Common myeloid progenitor, CD34-positive (primary cell): ENCODE measurements at regions of chr7 and their contacts with region 1.

Region 1: DNA sequence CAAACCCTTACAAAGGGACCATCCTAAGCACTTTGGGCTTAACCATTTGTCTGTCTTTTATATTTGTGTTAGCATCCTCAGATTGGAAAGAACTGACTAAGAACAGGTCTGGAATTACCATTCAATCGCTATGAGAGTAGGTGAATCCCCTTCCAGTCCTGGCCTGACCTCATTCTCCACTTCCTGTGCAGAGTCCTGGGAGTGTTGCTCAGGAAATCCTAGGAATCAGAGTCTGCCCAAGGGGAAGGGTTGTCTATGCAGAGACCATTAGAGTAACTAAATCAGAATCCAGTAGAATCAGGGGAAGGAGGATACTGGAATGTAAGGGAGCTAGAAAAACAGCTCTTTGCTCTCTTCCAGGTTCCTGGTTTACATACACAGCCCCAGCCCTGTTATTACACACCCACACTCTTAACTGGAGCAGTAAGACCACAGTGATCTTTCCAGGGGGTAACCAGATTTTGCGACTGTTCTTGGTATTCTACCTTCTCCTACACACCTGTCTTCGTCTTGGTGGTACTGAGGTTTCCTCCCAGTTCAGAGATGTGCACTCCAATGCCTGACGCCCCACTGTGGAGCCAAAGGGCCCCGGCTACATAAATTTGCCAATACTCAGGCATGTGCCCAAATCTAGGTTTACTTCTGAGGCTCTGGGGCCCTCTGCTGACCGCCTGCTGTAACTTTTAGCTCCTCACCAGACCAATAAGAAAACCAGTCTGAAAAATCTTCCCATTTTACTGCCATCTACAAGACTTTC is 103.7 kb downstream of the RNF216 start:
- DNase-seq: peak; percentile 68 to 85 (median 83)
- H3K4me3 ChIP-seq: no peak overlapping the region
- H3K27ac ChIP-seq: no peak overlapping the region
- H3K4me1 ChIP-seq: peaks cover 0 to 26% (median 8%) of the 10 kb centered on the region in 4 experiments
- H3K27me3 ChIP-seq: no peaks in the 10 kb centered on the region

Region 2: DNA sequence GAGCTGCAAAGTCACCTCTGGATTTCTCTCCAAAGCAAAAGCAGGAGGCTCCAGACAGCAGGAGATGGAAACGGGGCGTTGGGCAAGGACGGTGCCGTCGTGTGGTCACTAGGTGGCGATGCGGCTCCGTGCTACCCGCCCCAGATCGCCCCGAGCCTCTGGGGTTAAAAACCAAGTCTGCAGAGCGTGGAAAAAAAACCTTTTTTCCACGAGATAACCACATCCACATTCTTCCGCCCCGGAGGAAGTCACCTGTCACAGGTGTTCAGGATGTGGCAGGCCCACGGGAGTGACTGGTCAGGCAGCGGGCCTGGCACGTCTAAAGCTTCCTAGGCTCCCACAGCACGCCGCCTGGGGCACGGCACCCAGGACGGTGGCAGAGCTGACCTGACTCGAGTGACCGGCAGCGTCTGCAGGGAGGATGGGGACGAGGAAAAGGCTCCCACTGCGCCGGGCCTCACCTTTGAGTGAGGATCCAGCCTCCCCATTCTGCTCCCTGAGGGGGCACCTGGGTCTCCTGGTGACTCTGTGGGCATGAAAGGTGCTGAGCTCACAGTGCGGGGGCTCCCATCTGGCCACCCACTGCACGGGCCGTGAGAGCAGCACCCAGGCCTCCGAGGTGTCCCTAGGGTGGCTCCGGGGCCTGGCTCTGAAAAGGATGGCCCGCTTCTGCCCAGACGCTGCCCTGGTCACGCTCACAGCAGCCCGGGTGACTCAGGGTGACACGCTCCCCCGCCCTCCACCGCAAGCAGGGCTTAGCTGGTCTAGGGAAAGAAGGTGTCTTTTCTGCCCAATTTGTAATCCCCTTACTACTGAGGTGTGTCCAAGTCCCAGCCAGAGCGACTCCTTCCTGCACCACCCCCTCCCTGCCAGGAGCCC is 182.8 kb before region 1 on chr7:
- CTCF ChIA-PET with region 1: interaction called, 87 read pairs
- POLR2A ChIA-PET with region 1: no interaction called
- DNase-seq: peak; percentile 76 to 85 (median 82)
- H3K4me3 ChIP-seq: peak overlapping the region in 4 of 7 experiments; percentile 25 to 59 (median 36)
- H3K27ac ChIP-seq: no peak overlapping the region
- H3K4me1 ChIP-seq: peaks cover 0 to 52% (median 44%) of the 10 kb centered on the region in 4 experiments
- H3K27me3 ChIP-seq: no peaks in the 10 kb centered on the region

Region 3: GRCh38 chr7:5636914-5637313 is 40.8 kb before region 1 on chr7:
- CTCF ChIA-PET with region 1: no interaction called
- POLR2A ChIA-PET with region 1: no interaction called
- DNase-seq: peak; percentile 48 to 74 (median 71)
- H3K4me3 ChIP-seq: peak overlapping the region in 1 of 7 experiments; percentile 35
- H3K27ac ChIP-seq: peak overlapping the region in 1 of 2 experiments; percentile 22
- H3K4me1 ChIP-seq: peaks cover 0 to 41% (median 27%) of the 10 kb centered on the region in 4 experiments
- H3K27me3 ChIP-seq: no peaks in the 10 kb centered on the region

Region 4: DNA sequence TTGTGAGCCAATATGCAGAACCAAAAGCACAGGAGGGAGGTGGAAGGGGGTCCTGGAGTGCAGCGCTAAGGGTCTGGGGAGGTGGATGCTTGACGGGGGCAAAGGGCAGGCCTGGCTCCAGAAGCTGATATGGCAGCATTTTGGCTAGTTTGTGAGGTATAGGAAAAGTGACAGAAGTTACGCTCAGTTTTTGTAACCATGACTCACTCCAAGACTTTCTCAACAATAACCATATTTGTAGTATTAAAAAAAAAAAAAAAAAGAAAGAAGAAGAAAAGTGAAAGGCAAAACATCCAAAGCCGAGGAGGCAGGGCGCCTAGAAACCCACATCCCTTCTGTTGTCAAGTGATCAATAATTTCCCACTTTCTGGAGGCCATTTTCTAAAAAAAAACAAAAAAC is 11.4 kb after region 1 on chr7:
- CTCF ChIA-PET with region 1: interaction called, 48 read pairs
- POLR2A ChIA-PET with region 1: interaction called, 4 read pairs
- DNase-seq: peak in 2 of 3 donors; percentile 62 to 64
- H3K4me3 ChIP-seq: no peak overlapping the region
- H3K27ac ChIP-seq: no peak overlapping the region
- H3K4me1 ChIP-seq: peaks cover 17 to 30% (median 22%) of the 10 kb centered on the region in 4 experiments
- H3K27me3 ChIP-seq: no peaks in the 10 kb centered on the region

Region 5: DNA sequence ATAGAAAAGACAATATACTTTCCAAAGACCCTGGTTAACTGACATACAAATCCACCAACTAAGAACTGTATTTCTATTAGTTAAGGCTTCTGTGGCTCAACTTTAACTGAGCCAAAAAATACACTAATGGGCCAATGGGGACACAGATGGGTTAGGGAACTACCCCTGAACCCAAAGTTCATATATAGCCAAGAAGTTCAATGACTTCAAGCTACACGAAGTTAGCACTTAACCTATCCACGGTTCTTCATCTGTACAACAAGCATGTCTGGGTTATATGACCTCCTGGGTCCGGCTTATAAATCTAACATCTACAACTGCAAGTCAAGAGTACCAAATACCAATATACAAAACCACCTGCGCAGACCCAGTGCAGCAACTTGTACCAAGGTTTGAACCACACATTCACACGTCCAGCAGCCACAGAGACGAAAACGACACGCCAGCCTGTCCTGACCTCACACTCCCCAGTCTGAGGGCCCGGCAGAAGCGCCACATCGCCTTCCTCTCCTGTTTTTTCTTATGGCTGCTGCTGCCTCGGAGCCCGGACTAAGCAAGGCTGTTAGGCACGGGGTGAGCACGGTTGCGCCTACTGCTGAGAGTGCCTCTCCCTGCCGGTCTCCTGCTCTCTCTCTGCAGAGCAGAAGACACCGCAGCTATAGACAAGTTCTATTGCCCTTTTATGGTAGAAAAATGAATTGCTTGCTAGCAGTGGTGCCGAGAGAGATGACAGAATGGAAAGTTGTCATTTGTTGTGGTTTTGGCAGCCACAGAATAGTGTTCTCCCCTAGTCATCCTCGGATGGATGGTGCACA is 17.4 kb after region 1 on chr7:
- CTCF ChIA-PET with region 1: interaction called, 99 read pairs
- POLR2A ChIA-PET with region 1: interaction called, 4 read pairs
- DNase-seq: peak; percentile 28 to 82 (median 78)
- H3K4me3 ChIP-seq: peak overlapping the region in 4 of 7 experiments; percentile 0 to 47 (median 20)
- H3K27ac ChIP-seq: peak overlapping the region in 1 of 2 experiments; percentile 8
- H3K4me1 ChIP-seq: peaks cover 40 to 63% (median 52%) of the 10 kb centered on the region in 4 experiments
- H3K27me3 ChIP-seq: no peaks in the 10 kb centered on the region

Region 6: GRCh38 chr7:5704534-5704922 is 26.8 kb after region 1 on chr7:
- CTCF ChIA-PET with region 1: interaction called, 99 read pairs
- POLR2A ChIA-PET with region 1: no interaction called
- DNase-seq: peak; percentile 84 to 91 (median 86)
- H3K4me3 ChIP-seq: no peak overlapping the region
- H3K27ac ChIP-seq: no peak overlapping the region
- H3K4me1 ChIP-seq: peaks cover 4 to 23% (median 12%) of the 10 kb centered on the region in 4 experiments
- H3K27me3 ChIP-seq: no peaks in the 10 kb centered on the region